ENCODE measurements at regions of chr7 and their contacts with region 1.

Region 1: GRCh38 chr7:36303202-36304098 is 86.2 kb upstream of the ANLN start:
- DNase-seq: peak; percentile 69
- H3K4me3 ChIP-seq: no peak overlapping the region
- CTCF ChIP-seq: no peak

Region 2: GRCh38 chr7:35983626-35984025 is 319.8 kb before region 1 on chr7:
- in situ Hi-C with region 1: loop called (anchors 5 kb)
- DNase-seq: no peak
- H3K4me3 ChIP-seq: no peak overlapping the region
- CTCF ChIP-seq: no peak

Region 3: GRCh38 chr7:36408589-36408988 is 105.1 kb after region 1 on chr7:
- in situ Hi-C with region 1: no loop called
- DNase-seq: no peak
- H3K4me3 ChIP-seq: no peak overlapping the region
- CTCF ChIP-seq: no peak